ENCODE measurements at regions of chr4 and their contacts with region 1.

Region 1: GRCh38 chr4:47836641-47837093 is 1.2 kb downstream of the CORIN start:
- DNase-seq: peak; percentile 74
- H3K4me3 Mint-ChIP-seq: peak overlapping the region; percentile 78
- H3K27ac Mint-ChIP-seq: no peak overlapping the region
- H3K4me1 Mint-ChIP-seq: peaks cover 25% of the 10 kb centered on the region
- H3K27me3 Mint-ChIP-seq: peaks cover 5% of the 10 kb centered on the region

Region 2: GRCh38 chr4:47485047-47485692 is 351.5 kb before region 1 on chr4 and contains the start of gene ATP10D:
- CTCF ChIA-PET with region 1: no interaction called
- intact Hi-C with region 1: loop called (anchors 5 kb)
- DNase-seq: peak; percentile 82
- H3K4me3 Mint-ChIP-seq: peak within 1 kb of the TSS; percentile 93
- H3K27ac Mint-ChIP-seq: peak within 1 kb of the TSS; percentile 65
- H3K4me1 Mint-ChIP-seq: peaks cover 16% of the 10 kb centered on the region
- H3K27me3 Mint-ChIP-seq: no peaks in the 10 kb centered on the region
- total RNA-seq, gene ATP10D: 2.7 to 3.1 TPM

Region 3: GRCh38 chr4:47704693-47705325 is 131.9 kb before region 1 on chr4:
- CTCF ChIA-PET with region 1: interaction called, 12 read pairs
- intact Hi-C with region 1: loop called (anchors 1 kb)
- DNase-seq: peak; percentile 37
- H3K4me3 Mint-ChIP-seq: no peak overlapping the region
- H3K27ac Mint-ChIP-seq: no peak overlapping the region
- H3K4me1 Mint-ChIP-seq: no peaks in the 10 kb centered on the region
- H3K27me3 Mint-ChIP-seq: peaks cover 15% of the 10 kb centered on the region

Region 4: DNA sequence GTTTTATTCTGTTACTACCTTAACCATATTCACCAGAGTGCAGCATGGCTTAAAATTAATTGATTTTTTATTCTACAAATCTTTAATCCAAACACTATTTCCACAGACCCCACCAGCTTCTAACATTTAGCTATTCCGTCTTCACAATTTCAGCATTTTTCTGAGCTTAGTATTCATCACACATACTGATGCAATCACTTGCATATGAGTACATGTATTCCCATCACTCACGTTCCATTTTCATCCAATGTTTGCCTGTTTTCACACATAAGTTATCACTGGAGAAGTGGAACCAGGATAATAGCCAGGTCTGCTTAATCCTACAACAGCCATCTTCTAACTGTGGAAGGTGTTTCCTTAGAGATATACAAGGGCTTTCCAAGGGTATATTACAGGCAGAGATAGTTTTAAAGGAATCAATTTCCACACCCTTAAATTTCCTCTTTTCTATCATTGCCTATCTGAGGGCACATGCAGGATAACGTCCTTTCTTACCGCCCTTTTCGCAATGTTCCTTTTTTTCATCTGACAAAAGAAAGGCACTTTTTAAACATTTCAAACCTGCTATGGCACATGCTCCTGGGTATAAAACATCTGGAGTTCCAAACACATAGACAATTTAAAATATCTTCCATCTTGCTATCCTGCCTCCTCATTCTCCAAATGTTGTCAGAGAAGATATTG is 114.6 kb before region 1 on chr4:
- CTCF ChIA-PET with region 1: no interaction called
- intact Hi-C with region 1: no loop called
- DNase-seq: no peak
- H3K4me3 Mint-ChIP-seq: no peak overlapping the region
- H3K27ac Mint-ChIP-seq: no peak overlapping the region
- H3K4me1 Mint-ChIP-seq: no peaks in the 10 kb centered on the region
- H3K27me3 Mint-ChIP-seq: peaks cover 6% of the 10 kb centered on the region

Region 5: GRCh38 chr4:47891928-47892327 is 55.3 kb after region 1 on chr4:
- CTCF ChIA-PET with region 1: interaction called, 3 read pairs
- intact Hi-C with region 1: loop called (anchors 5 kb)
- DNase-seq: no peak
- H3K4me3 Mint-ChIP-seq: no peak overlapping the region
- H3K27ac Mint-ChIP-seq: no peak overlapping the region
- H3K4me1 Mint-ChIP-seq: peaks cover 13% of the 10 kb centered on the region
- H3K27me3 Mint-ChIP-seq: no peaks in the 10 kb centered on the region

Region 6: GRCh38 chr4:48016141-48017103 is 179.8 kb after region 1 on chr4 and contains the starts of genes CNGA1 and NIPAL1:
- CTCF ChIA-PET with region 1: no interaction called
- intact Hi-C with region 1: loop called (anchors 5 kb)
- DNase-seq: peak; percentile 72
- H3K4me3 Mint-ChIP-seq: peak within 1 kb of the TSS; percentile 81
- H3K27ac Mint-ChIP-seq: peak within 1 kb of the TSS; percentile 46
- H3K4me1 Mint-ChIP-seq: peaks cover 26% of the 10 kb centered on the region
- H3K27me3 Mint-ChIP-seq: peaks cover 5% of the 10 kb centered on the region
- total RNA-seq, gene CNGA1: 0.26 to 0.94 TPM
- total RNA-seq, gene NIPAL1: 1.0 to 2.0 TPM

Region 7: GRCh38 chr4:48162162-48162561 is 325.5 kb after region 1 on chr4:
- CTCF ChIA-PET with region 1: no interaction called
- intact Hi-C with region 1: loop called (anchors 10 kb)
- DNase-seq: no peak
- H3K4me3 Mint-ChIP-seq: no peak overlapping the region
- H3K27ac Mint-ChIP-seq: no peak overlapping the region
- H3K4me1 Mint-ChIP-seq: peaks cover 16% of the 10 kb centered on the region
- H3K27me3 Mint-ChIP-seq: no peaks in the 10 kb centered on the region

Region 8: DNA sequence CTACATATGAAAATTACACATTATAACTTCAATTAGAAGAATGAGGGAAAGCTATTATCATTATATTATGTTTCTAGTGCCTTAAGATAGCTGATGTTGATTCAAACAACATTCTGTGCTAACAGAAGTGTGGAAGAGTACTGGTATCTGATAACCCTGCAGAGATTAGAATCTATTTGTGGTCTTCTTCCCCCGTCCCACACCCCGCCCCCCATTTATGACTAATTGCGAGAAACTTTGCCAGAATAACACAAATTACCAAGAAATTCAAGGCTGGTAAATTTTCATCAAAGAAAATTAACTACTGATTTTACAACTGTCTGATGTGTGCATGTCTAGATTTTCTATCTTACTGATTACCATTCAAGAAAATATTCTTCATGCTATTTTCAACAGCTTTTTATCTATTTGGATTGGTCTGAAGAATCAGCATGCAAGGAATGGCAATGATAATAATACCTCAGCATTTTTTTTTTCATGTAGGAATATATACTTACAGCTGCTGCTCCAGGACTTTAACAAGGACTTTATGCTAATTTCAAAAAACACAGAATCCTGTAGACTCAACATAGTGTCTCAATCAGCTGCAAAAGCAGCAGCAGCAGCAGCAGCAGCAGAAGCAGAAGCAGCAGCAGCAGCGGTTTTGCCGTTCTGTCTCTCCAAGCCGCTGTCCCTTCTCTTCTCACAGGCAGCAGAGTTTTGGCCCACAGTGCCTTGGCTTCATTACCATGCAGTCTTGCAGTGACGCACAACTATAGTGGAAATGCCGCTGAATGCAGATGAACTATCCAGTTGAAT is 816.7 kb after region 1 on chr4:
- CTCF ChIA-PET with region 1: no interaction called
- intact Hi-C with region 1: no loop called
- DNase-seq: peak; percentile 36
- H3K4me3 Mint-ChIP-seq: no peak overlapping the region
- H3K27ac Mint-ChIP-seq: no peak overlapping the region
- H3K4me1 Mint-ChIP-seq: peaks cover 39% of the 10 kb centered on the region
- H3K27me3 Mint-ChIP-seq: no peaks in the 10 kb centered on the region

Measured in activated naive CD4-positive, alpha-beta T cell treated with anti-CD3 and anti-CD28 coated beads for 36 hours (primary cell).